ENCODE measurements at regions of chr5 and their contacts with region 1.

Region 1: DNA sequence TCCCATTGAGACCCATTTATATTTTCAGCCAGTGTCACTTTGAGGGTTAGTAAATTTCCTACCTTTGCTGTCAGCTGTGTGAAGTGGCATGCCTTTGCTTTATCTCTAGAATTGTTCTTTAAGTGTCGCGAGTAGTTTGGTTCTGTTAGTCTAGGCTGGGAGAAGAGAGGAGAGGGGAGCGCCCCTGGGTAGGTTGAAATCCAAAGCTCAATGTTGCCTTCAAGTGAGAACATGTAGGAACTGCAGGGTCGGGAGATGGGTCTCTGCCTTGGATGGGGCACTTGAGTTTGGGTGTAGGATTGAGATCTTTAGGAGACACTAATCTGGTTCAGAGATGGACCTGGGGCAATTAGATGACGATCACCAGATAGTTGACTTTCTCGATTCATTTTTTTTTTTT is 46.3 kb downstream of the STC2 start:
- DNase-seq: peak; percentile 76

Region 2: GRCh38 chr5:172396220-172396619 is 885.7 kb before region 1 on chr5:
- CTCF ChIA-PET with region 1: interaction called, 10 read pairs
- POLR2A ChIA-PET with region 1: no interaction called
- DNase-seq: no peak

Region 3: DNA sequence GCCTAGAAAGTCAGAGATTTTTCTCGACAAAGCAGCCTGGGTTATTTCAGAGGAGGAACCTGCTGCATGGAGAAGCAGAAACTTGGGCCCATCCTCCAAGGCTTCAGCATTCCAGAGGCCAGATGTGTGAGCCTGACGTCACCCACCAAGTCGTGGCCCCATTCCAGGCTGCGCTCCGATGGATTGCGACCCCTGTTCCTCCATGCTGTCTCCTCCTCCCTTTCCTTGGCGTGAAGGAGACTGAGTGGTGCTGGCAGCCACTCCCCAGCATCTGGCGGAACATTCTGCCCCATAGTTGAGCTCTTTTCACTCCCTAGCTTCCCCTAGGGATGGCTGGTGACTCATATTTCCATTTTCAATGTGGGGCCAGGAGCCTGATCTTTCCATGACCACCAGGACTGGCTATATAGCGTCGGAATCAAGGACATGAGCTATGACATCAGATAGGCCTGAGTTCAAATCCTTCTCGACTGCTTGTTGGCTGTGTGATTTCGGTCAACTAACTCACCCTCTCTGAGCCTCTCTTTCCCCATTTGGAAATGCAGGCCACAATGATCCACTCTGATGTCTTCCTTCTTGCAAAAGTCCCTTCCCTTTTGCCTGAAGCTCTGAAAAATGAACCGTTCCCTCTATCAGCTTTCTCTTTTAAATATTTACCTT is 486.5 kb before region 1 on chr5:
- CTCF ChIA-PET with region 1: no interaction called
- POLR2A ChIA-PET with region 1: no interaction called
- DNase-seq: no peak

Measured in HEK293T (cell line).